HepG2 (cell line): ENCODE measurements at regions of chr2 and their contacts with region 1.

Region 1: DNA sequence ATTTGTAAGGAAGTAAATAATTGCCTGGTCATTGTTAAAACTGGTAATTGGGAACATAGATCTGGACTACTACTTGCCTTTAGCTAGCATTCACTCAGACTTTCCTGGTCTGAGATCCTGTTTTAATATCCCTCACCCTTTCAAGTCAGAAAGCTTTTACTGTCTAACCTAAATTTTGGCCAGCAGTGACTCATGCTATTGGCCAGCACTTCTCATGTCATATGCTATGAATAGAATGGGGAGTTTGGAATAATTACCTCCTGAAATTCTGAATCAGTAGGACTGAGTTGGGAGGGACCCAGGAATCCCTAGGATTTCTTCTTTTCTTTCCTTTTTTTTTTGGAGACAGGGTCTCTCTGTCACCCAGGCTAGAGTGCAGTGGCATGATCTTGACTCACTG is 19.3 kb downstream of the STK36 start:
- DNase-seq: no peak
- ATAC-seq: no peak
- H3K4me3 ChIP-seq: no peak overlapping the region
- H3K27ac ChIP-seq: no peak overlapping the region
- H3K4me1 ChIP-seq: peaks cover 17% of the 10 kb centered on the region
- H3K27me3 ChIP-seq: no peaks in the 10 kb centered on the region
- CTCF ChIP-seq: no peak
- EP300 ChIP-seq: no peak
- POLR2A ChIP-seq: no peak
- RAD21 ChIP-seq: no peak

Region 2: DNA sequence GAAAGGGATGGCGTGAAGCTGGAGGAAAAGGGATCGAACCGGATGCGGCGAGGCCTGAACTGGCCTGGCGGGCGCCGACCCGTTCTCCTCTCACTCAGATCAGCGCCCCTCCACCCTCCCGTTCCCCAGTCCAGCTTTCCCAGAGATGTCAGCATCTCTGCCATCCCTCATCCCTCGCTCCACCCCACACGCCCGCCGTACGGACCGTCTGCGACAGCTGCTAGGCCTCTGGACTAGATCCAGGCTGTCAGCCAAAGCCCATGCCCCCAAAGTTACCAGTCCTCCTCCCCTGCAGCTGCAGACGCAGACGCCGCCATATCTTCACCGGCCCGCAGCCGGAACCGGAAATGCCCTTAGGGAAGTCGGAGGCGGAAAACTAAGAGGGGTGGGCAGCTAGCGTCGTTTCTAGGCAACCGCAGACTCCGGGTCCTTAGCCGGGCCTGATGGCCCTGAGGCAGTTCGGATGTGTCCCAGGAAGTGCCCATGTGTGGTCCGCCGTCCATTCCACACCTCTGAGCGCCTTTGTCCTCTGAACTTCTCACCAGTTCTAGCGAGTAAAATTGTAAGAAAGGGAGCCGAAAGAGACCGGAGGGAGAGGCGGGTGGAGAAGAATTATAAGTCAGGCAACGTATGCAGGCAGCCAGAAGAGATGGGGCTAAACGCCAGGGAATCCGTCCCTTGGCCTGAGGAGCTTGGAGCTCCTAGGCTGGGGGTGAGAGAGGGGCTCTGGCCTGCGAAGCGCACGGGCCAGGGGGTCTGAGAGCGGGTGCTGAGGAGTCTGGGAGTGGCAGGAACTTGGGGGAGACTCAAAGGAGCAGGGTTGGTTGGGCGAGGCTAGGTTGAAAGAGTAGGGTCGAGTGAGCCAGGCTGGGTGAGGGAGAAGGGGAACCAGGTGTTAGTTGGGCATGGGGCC is 19.3 kb before region 1 on chr2 and contains the starts of genes RNF25 and STK36:
- CTCF ChIA-PET with region 1: no interaction called
- POLR2A ChIA-PET with region 1: interaction called, 11 read pairs
- in situ Hi-C with region 1: no loop called
- intact Hi-C with region 1: loop called (anchors 1 kb)
- DNase-seq: peak; percentile 91
- ATAC-seq: peak; percentile 98
- H3K4me3 ChIP-seq: peak within 1 kb of the TSS; percentile 80 to 99 (median 98)
- H3K27ac ChIP-seq: peak within 1 kb of the TSS; percentile 63
- H3K4me1 ChIP-seq: peaks cover 18% of the 10 kb centered on the region
- H3K27me3 ChIP-seq: no peaks in the 10 kb centered on the region; a peak in 1 of 5 replicates
- CTCF ChIP-seq: peak; percentile 26; the same call in 1 of the 2 replicates
- EP300 ChIP-seq: no peak
- POLR2A ChIP-seq: peak; percentile 85 to 94
- RAD21 ChIP-seq: peak; percentile 28; the same call in 1 of the 2 replicates
- total RNA-seq, gene RNF25: 37.0 and 37.1 TPM in 2 replicates
- total RNA-seq, gene STK36: 17.6 and 45.9 TPM in 2 replicates